Activated naive CD8-positive, alpha-beta T cell treated with anti-CD3 and anti-CD28 coated beads, Interleukin-2, amount 10 ng/mL, durations not matched to agents 7 days and 5 days (primary cell): ENCODE measurements at regions of chr11 and their contacts with region 1.

Region 1: DNA sequence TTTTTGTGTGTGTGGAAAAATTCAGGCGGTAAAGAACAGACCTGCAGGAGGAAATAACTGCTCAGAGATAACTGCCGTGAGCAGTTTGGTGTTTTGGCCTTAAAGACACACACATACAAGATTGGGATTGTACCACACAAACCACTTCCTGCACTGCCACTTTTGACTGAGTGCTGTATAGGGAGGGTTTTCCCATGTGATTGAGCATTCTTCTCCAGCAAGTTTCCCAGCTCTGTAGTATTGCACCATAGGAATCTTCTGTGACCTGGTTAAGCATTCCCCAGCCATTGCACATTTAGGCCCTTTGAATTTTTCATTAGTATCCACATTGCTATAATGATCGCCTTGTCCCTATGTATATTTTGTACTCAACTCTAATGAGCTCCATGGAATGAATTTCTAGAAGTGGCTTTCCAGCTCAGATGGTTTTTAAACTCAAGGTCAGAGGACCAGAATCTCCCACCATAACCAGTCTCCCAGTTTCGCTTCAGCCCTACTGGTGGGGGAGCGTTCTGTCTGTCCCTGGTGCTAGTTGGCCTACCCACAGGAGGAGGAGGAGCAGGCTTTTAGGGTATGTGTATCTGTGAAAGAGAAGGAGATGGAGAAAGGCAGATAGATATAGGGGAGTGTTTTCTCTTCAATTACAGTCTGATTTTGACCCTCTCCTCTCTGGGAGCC is 9.3 kb downstream of the CD82 start:
- DNase-seq: no peak
- ATAC-seq: peak; percentile 74
- H3K4me3 Mint-ChIP-seq: peak overlapping the region; percentile 74
- H3K27ac Mint-ChIP-seq: peak overlapping the region; percentile 77
- H3K4me1 Mint-ChIP-seq: peaks cover 66% of the 10 kb centered on the region
- H3K27me3 Mint-ChIP-seq: no peaks in the 10 kb centered on the region

Region 2: DNA sequence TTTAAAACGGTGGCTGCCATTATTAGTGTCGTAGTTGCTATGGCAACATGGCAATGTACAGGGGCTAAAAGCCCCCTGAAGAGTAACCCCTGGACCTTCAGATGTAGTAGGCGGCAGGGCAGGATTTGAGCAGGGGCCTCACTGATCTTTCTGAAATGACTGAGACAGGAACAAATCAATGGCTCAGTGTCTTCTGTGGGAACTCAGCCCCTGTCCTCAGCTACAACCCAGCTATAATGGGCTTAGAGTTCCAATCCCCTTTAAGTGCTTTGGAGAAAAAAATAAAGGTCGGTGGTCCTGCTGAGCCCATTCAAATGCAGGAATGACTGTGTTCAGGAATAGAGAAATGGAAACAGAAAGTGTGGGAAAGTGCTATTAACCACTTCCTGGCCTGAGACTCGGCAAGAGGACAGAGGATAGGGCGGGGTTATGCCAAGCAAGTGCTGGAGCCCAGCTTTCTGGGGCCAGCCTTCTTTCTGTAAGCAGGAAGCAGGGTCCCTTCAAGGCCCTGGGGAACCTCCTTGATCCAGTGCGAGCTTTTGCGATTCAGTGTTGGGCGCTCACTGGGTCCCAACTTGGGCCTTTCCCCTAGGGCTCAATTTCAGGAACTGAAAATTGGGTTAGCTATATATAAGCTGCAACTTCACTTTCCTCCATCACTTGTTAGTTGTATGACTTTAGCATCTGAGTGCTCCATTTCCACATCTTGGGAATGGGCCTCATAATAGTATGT is 15.4 kb before region 1 on chr11:
- POLR2A ChIA-PET with region 1: interaction called, 12 read pairs
- DNase-seq: no peak
- ATAC-seq: peak; percentile 92
- H3K4me3 Mint-ChIP-seq: peak overlapping the region; percentile 70
- H3K27ac Mint-ChIP-seq: peak overlapping the region; percentile 87
- H3K4me1 Mint-ChIP-seq: peaks cover 36% of the 10 kb centered on the region
- H3K27me3 Mint-ChIP-seq: no peaks in the 10 kb centered on the region